ENCODE measurements at regions of chrX and their contacts with region 1.

Region 1: GRCh38 chrX:17160971-17161370 is 214.0 kb upstream of the NHS start:
- DNase-seq: peak; percentile 38
- ATAC-seq: no peak
- H3K4me3 ChIP-seq: no peak overlapping the region
- H3K27ac ChIP-seq: no peak overlapping the region
- H3K4me1 ChIP-seq: no peaks in the 10 kb centered on the region
- H3K27me3 ChIP-seq: no peaks in the 10 kb centered on the region
- CTCF ChIP-seq: peak; percentile 65

Region 2: GRCh38 chrX:17323376-17323775 is 162.4 kb after region 1 on chrX:
- CTCF ChIA-PET with region 1: no interaction called
- POLR2A ChIA-PET with region 1: no interaction called
- intact Hi-C with region 1: loop called (anchors 2 kb)
- DNase-seq: peak; percentile 9
- ATAC-seq: no peak
- H3K4me3 ChIP-seq: no peak overlapping the region
- H3K27ac ChIP-seq: no peak overlapping the region
- H3K4me1 ChIP-seq: no peaks in the 10 kb centered on the region
- H3K27me3 ChIP-seq: no peaks in the 10 kb centered on the region
- CTCF ChIP-seq: peak; percentile 47

Measured in PC-3 (cell line).